Heart left ventricle (tissue), 16 donors: ENCODE measurements at regions of chr4 and their contacts with region 1.

Region 1: GRCh38 chr4:113116414-113117357 is 67.2 kb downstream of the ANK2 start:
- DNase-seq: peak in 1 of 5 donors; percentile 29
- ATAC-seq: peak; percentile 53 to 73 (median 68)
- H3K4me3 ChIP-seq: peak overlapping the region in 1 of 12 donors; percentile 6
- H3K27ac ChIP-seq: no peak overlapping the region
- H3K4me1 ChIP-seq: peaks cover 0 to 26% (median 0%) of the 10 kb centered on the region in 12 donors
- H3K27me3 ChIP-seq: no peaks in the 10 kb centered on the region
- CTCF ChIP-seq: no peak
- POLR2A ChIP-seq: no peak

Region 2: GRCh38 chr4:112552668-112553067 is 564.0 kb before region 1 on chr4:
- intact Hi-C with region 1: no loop called
- DNase-seq: no peak
- ATAC-seq: no peak
- H3K4me3 ChIP-seq: no peak overlapping the region
- H3K27ac ChIP-seq: no peak overlapping the region
- H3K4me1 ChIP-seq: no peaks in the 10 kb centered on the region
- H3K27me3 ChIP-seq: no peaks in the 10 kb centered on the region
- CTCF ChIP-seq: no peak
- POLR2A ChIP-seq: no peak

Region 3: GRCh38 chr4:113222471-113222870 is 105.8 kb after region 1 on chr4:
- intact Hi-C with region 1: loop called in 1 of 10 experiments (anchors 10 kb)
- DNase-seq: no peak
- ATAC-seq: no peak
- H3K4me3 ChIP-seq: no peak overlapping the region
- H3K27ac ChIP-seq: no peak overlapping the region
- H3K4me1 ChIP-seq: no peaks in the 10 kb centered on the region
- H3K27me3 ChIP-seq: no peaks in the 10 kb centered on the region
- CTCF ChIP-seq: no peak
- POLR2A ChIP-seq: no peak

Region 4: GRCh38 chr4:113248320-113248719 is 131.6 kb after region 1 on chr4:
- intact Hi-C with region 1: loop called in 1 of 10 experiments (anchors 10 kb)
- DNase-seq: no peak
- ATAC-seq: no peak
- H3K4me3 ChIP-seq: no peak overlapping the region
- H3K27ac ChIP-seq: no peak overlapping the region
- H3K4me1 ChIP-seq: no peaks in the 10 kb centered on the region
- H3K27me3 ChIP-seq: no peaks in the 10 kb centered on the region
- CTCF ChIP-seq: peak in 5 of 12 donors; percentile 7 to 28 (median 20)
- POLR2A ChIP-seq: no peak

Region 5: GRCh38 chr4:113260688-113261087 is 144.0 kb after region 1 on chr4:
- intact Hi-C with region 1: no loop called
- DNase-seq: no peak
- ATAC-seq: no peak
- H3K4me3 ChIP-seq: no peak overlapping the region
- H3K27ac ChIP-seq: no peak overlapping the region
- H3K4me1 ChIP-seq: peaks cover 0 to 6% (median 0%) of the 10 kb centered on the region in 12 donors
- H3K27me3 ChIP-seq: no peaks in the 10 kb centered on the region
- CTCF ChIP-seq: no peak
- POLR2A ChIP-seq: no peak